ENCODE measurements at regions of chr3 and their contacts with region 1.

Region 1: GRCh38 chr3:61561374-61562041 is at the start of gene PTPRG:
- DNase-seq: peak; percentile 96
- total RNA-seq, gene PTPRG: 80.4 to 98.0 TPM

Region 2: DNA sequence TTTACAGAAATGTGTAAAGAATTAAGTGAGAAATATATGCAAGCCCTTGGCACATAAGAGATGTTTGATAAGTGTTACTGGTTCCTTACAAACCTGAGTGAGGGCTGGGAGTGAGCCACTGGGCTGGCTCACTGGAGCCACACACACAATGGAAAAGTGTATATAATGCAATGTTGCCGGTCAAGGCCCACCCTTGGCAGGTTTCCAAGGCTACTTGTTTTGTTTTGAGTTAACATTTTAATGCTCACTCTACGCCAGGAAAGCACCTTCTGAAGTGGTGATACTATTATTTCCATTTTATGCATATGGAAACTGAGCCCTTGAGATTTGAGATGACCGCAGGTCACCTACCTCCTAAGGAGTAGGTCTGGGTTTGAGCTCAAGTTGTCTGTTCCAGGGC is 238.4 kb before region 1 on chr3:
- intact Hi-C with region 1: loop called in 1 of 2 experiments (anchors 5 kb)
- DNase-seq: no peak

Region 3: GRCh38 chr3:61594144-61594963 is 32.8 kb after region 1 on chr3:
- intact Hi-C with region 1: no loop called
- DNase-seq: no peak

Region 4: DNA sequence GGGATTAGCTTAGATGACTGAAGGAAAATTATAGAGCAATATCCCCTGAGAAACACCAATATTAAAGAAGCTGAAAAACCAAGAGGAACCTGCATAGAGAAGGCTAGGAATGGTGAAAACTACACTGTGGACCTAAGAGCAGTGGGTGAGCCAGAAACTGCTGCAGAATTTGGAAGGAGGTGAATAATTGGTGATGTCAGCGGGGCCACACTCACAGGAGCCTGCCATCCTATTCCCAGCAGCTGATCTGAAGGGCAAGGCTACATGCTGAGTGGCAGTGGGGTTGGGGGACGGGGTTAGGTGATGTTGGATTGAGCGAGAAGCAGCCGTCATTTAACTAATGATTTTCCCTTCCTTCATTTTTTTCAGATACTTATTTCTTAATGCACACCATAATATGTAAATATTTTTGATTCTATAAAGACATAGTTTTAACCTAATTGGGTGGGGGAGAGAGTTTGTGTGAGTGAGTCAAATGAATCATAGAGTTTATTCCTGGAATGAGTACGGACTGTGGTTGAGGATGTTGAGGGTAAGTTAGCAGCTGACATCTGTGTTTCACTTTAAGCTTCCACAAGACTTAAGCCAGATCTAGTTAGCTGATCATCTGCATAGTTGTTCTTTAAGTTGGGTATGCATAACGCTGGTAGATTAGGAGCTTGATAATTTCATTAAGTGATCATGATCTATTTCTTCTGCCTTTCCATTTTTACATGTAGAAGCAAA is 222.6 kb after region 1 on chr3:
- intact Hi-C with region 1: no loop called
- DNase-seq: no peak

Region 5: GRCh38 chr3:61847784-61848462 is 286.4 kb after region 1 on chr3:
- intact Hi-C with region 1: loop called (anchors 10 kb)
- DNase-seq: peak; percentile 84

Region 6: GRCh38 chr3:61858056-61858455 is 296.5 kb after region 1 on chr3:
- intact Hi-C with region 1: loop called in 1 of 2 experiments (anchors 10 kb)
- DNase-seq: no peak

Region 7: DNA sequence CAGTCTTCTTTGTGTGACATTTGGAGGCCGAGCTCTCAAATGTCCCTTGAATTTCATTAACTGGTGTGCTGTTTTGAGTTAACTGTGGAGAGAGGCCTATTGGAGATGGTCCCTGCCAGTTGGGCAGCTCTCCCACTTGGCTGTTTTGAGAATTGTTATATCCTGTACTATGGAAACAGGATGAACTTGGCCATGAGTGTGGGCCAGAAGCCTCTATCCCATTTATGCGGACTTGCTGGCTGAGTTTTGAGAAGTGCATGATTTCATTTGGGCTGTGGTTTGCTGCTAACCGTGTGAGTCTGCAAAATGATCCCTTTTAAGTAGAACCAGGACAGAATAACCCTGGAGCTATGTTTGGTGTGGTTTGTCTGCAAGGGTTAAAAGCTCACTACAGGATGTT is 365.8 kb after region 1 on chr3:
- intact Hi-C with region 1: loop called in 1 of 2 experiments (anchors 5 kb)
- DNase-seq: peak; percentile 95

Region 8: GRCh38 chr3:61956236-61956635 is 394.7 kb after region 1 on chr3:
- intact Hi-C with region 1: loop called in 1 of 2 experiments (anchors 10 kb)
- DNase-seq: no peak

Region 9: GRCh38 chr3:62188681-62189383 is 627.3 kb after region 1 on chr3:
- intact Hi-C with region 1: loop called (anchors 5 to 10 kb)
- DNase-seq: peak; percentile 90

Region 10: GRCh38 chr3:63068012-63068645 is 1506.6 kb after region 1 on chr3:
- intact Hi-C with region 1: no loop called
- DNase-seq: no peak